ENCODE measurements at regions of chr7 and their contacts with region 1.

Region 1: GRCh38 chr7:108181073-108181985 is 51.2 kb upstream of the LAMB4 start:
- DNase-seq: peak; percentile 29 to 43
- H3K4me3 ChIP-seq: no peak overlapping the region
- H3K27ac ChIP-seq: no peak overlapping the region
- H3K4me1 ChIP-seq: no peaks in the 10 kb centered on the region
- H3K27me3 ChIP-seq: no peaks in the 10 kb centered on the region
- CTCF ChIP-seq: peak; percentile 91

Region 2: DNA sequence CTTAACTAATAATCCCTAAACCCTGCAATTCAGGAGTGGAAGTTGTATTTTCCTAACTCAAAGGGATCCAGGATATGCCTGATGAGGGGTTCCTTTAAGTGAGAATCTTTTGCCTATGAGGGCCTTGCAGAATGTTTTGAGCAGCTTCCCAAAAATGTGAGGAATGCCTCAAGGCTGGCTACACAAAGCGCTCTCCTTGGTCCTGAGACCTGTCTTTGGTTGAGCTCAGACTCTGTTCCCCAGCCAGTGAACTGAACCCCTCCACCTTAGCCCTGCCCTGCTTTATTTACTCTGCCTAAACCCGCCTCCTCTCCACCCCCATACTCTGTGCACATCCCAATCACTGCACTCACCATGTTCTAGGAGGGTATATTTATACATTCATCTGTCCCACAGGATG is 166.3 kb after region 1 on chr7:
- CTCF ChIA-PET with region 1: no interaction called
- POLR2A ChIA-PET with region 1: interaction called, 5 read pairs
- intact Hi-C with region 1: loop called (anchors 10 kb)
- DNase-seq: peak; percentile 44 to 54
- H3K4me3 ChIP-seq: no peak overlapping the region
- H3K27ac ChIP-seq: no peak overlapping the region
- H3K4me1 ChIP-seq: peaks cover 46% of the 10 kb centered on the region
- H3K27me3 ChIP-seq: no peaks in the 10 kb centered on the region
- CTCF ChIP-seq: no peak

Region 3: DNA sequence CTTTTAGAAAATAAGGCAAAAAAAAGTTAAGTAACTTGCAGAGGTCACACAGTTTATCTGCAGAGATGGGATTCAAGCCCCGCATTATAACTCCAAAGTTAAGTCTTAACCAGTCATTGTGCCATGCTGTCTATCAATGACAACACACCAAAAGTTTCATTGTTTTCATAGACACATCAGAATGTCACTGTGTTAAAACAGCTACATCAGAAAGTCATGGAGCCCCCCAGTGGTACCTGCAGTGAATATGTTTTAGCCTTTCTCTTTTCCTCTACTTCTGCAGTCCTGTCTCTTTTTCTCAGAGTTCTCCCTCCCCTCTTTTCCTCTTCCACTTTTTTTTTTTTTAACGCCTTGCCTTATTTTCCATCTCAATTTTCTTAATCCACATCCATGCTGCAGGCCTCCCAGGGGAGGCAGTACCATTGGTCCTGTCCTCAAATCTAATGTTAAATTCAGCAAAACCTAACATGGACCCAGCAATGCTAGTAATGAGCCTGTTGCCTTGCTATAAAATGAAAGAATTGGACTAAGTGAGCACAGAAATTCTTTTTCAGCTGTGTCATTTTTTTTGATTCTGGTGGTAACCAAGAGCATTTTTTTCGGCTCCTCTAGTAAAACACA is 278.7 kb after region 1 on chr7:
- CTCF ChIA-PET with region 1: interaction called, 13 read pairs
- POLR2A ChIA-PET with region 1: no interaction called
- intact Hi-C with region 1: loop called (anchors 1 kb)
- DNase-seq: peak in 1 of 2 experiments; percentile 38
- H3K4me3 ChIP-seq: no peak overlapping the region
- H3K27ac ChIP-seq: no peak overlapping the region
- H3K4me1 ChIP-seq: 0 out of 2 replicates have a peak, but pooled peaks cover 10% of the 10 kb centered on the region
- H3K27me3 ChIP-seq: no peaks in the 10 kb centered on the region
- CTCF ChIP-seq: peak; percentile 71

Region 4: DNA sequence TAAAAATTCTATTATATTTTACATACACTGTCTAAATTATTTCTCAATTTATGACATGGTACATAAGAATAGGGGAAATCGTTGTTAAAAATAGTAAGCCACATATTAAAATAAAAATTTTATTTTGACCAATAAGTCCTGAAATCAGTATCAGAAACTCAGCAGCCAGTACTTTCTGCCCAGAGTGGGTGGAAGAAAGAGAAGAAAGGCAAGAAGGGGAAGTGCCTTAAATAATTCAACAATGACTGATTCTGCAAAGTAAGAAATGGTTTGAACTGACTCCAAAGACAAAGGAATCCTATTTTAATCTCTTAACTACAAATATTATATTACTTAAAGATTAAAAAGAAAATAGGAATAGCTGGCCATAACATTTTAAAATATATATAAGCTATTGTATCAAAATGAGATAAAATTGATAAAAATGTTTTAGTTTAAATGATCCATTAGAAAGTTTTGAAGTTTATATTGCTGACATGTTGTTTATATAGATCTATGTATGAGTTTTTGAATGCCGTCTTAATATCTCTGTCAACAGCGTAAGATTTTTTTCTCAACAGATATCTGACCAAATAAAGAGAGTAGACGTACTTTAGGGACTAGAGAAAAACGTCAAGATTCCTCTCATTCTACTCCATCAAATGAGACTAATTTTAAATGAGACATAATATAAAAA is 305.1 kb after region 1 on chr7:
- CTCF ChIA-PET with region 1: interaction called, 3 read pairs
- POLR2A ChIA-PET with region 1: interaction called, 4 read pairs
- intact Hi-C with region 1: loop called (anchors 2 kb)
- DNase-seq: no peak
- H3K4me3 ChIP-seq: no peak overlapping the region
- H3K27ac ChIP-seq: no peak overlapping the region
- H3K4me1 ChIP-seq: no peaks in the 10 kb centered on the region
- H3K27me3 ChIP-seq: no peaks in the 10 kb centered on the region
- CTCF ChIP-seq: no peak

Region 5: GRCh38 chr7:108497082-108497725 is 315.9 kb after region 1 on chr7:
- CTCF ChIA-PET with region 1: interaction called, 4 read pairs
- POLR2A ChIA-PET with region 1: no interaction called
- intact Hi-C with region 1: loop called (anchors 1 kb)
- DNase-seq: peak; percentile 40 to 49
- H3K4me3 ChIP-seq: no peak overlapping the region
- H3K27ac ChIP-seq: no peak overlapping the region
- H3K4me1 ChIP-seq: no peaks in the 10 kb centered on the region
- H3K27me3 ChIP-seq: no peaks in the 10 kb centered on the region
- CTCF ChIP-seq: peak; percentile 92